Dorsolateral prefrontal cortex (tissue), 120 donors: ENCODE measurements at regions of chr4 and their contacts with region 1.

Region 1: DNA sequence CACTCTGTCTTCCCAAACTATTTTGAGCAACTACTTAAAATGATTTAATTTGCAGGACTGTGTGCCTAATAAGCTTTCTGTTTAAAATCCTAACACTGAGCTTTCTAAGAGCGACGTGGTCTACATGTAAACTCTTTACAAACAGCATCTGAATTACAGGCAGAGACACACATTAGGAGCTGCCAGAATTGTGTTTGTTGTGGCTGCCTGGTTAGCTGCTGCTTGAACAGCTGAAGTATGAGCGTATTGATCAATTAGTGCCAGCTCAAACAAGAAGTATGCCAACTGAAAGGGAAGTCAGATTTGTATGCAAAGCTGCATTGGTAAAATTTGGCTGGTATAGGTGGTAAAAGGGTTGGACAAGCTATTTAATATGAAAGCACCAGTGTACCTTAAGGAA is 384.4 kb downstream of the PCDH7 start:
- DNase-seq: no peak
- H3K4me3 ChIP-seq: no peak overlapping the region
- H3K27ac ChIP-seq: no peak overlapping the region
- H3K27me3 ChIP-seq: peaks cover 0 to 13% (median 0%) of the 10 kb centered on the region in 45 donors
- CTCF ChIP-seq: no peak

Region 2: GRCh38 chr4:31071508-31072486 is 32.8 kb before region 1 on chr4:
- intact Hi-C with region 1: loop called in 1 of 2 experiments (anchors 2 kb)
- DNase-seq: no peak
- H3K4me3 ChIP-seq: no peak overlapping the region
- H3K27ac ChIP-seq: no peak overlapping the region
- H3K27me3 ChIP-seq: peaks cover 0 to 54% (median 0%) of the 10 kb centered on the region in 45 donors
- CTCF ChIP-seq: no peak